Gastrocnemius medialis (tissue), 4 donors: ENCODE measurements at regions of chr2 and their contacts with region 1.

Region 1: DNA sequence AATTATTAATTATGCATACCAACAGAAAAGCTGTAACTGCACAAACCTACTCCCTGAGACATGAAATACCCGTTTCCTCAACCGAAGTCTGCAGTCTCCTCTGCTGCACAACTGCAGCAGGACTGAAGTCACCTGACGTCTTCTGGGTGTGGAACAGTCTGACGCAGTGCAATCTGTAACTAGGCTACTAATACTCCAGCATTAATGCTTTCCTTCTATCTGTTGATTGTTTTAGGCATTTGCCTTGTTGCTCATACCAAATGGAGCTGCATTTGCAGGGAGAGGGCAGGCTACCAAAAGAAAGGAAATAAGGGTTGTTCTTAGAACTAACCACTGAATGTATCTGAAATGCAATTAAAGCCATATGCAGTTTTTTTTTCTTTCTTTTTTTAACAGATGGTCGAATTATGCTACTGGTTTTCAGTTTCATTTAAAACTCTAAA is 40.1 kb downstream of the RTN4 start:
- DNase-seq: peak; percentile 76 to 82
- ATAC-seq: peak; percentile 85 to 88
- H3K4me3 ChIP-seq: peak overlapping the region; percentile 50 to 63 (median 54)
- H3K27ac ChIP-seq: peak overlapping the region; percentile 89 to 94 (median 91)
- H3K4me1 ChIP-seq: peaks cover 61 to 62% of the 10 kb centered on the region in 2 donors
- H3K27me3 ChIP-seq: no peaks in the 10 kb centered on the region
- CTCF ChIP-seq: no peak
- POLR2A ChIP-seq: peak; percentile 63 to 80

Region 2: DNA sequence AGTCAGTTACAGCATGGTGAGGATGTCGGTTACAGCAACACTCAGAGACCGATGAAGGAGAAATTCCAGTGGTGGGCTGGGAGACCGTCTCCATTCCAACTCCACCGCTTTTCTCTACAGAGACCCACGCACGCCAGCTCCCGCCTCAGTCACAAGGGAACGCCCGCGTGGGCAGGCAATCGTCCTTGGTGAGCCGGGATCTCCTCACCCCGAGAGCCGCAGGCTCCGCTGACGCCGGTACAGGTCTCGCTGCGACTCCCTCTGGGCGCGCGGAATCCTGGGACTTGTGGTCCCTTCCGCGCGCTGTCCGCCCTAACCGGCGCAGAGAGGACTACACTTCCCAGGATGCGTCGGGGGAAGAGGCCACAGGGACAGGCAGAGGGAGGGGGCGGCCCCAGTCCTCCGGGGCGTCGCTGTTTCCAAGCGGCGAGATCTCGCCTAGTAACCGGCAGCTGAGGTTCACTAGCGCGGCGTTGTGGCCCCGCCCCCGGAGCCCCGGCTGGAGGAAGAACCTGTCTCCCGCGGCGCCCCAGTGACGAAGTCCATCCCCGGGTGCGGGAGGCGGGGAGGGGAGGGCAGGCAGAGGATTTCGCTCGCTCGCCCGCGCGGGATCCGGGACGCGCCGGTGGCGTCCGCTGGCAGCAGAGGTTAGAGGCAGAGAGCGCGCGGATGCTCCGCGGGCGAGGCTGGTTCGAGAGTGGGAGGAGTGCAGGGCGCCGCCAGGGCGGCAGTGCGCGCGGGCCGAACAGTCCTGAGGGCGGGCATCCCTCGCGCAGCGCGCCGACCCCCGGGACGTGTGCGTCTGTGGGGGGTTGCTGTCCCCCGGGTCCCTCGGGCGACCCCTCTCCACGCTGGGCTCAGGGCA is 286.8 kb before region 1 on chr2 and contains the start of gene EML6:
- in situ Hi-C with region 1: loop called in 1 of 4 experiments (anchors 25 kb)
- intact Hi-C with region 1: loop called (anchors 5 kb)
- DNase-seq: peak; percentile 97 to 98
- ATAC-seq: peak; percentile 96 to 98
- H3K4me3 ChIP-seq: peak within 1 kb of the TSS; percentile 60 to 88 (median 76)
- H3K27ac ChIP-seq: peak within 1 kb of the TSS; percentile 79 to 86 (median 82)
- H3K4me1 ChIP-seq: peaks cover 7 to 11% of the 10 kb centered on the region in 2 donors
- H3K27me3 ChIP-seq: no peaks in the 10 kb centered on the region
- CTCF ChIP-seq: peak in 3 of 5 experiments; percentile 6 to 35 (median 28)
- POLR2A ChIP-seq: peak; percentile 53 to 78
- total RNA-seq, gene EML6: 2.7 to 42.5 (median 11.9) TPM

Region 3: GRCh38 chr2:54927085-54927750 is 83.0 kb before region 1 on chr2:
- in situ Hi-C with region 1: no loop called
- intact Hi-C with region 1: loop called (anchors 5 kb)
- DNase-seq: peak in 1 of 2 donors; percentile 61
- ATAC-seq: peak; percentile 83
- H3K4me3 ChIP-seq: peak overlapping the region in 2 of 4 donors; percentile 31 to 35
- H3K27ac ChIP-seq: peak overlapping the region; percentile 77 to 88 (median 80)
- H3K4me1 ChIP-seq: peaks cover 9 to 15% of the 10 kb centered on the region in 2 donors
- H3K27me3 ChIP-seq: no peaks in the 10 kb centered on the region
- CTCF ChIP-seq: no peak
- POLR2A ChIP-seq: no peak

Region 4: GRCh38 chr2:54968561-54969218 is 41.5 kb before region 1 on chr2:
- in situ Hi-C with region 1: no loop called
- intact Hi-C with region 1: no loop called
- DNase-seq: peak; percentile 84 to 93
- ATAC-seq: peak; percentile 85 to 86
- H3K4me3 ChIP-seq: no peak overlapping the region
- H3K27ac ChIP-seq: peak overlapping the region; percentile 89 to 93 (median 91)
- H3K4me1 ChIP-seq: peaks cover 82 to 99% of the 10 kb centered on the region in 2 donors
- H3K27me3 ChIP-seq: no peaks in the 10 kb centered on the region
- CTCF ChIP-seq: no peak
- POLR2A ChIP-seq: no peak

Region 5: GRCh38 chr2:55232084-55232862 is 222.1 kb after region 1 on chr2 and contains the starts of genes CLHC1 and RPS27A:
- in situ Hi-C with region 1: no loop called
- intact Hi-C with region 1: loop called (anchors 5 kb)
- DNase-seq: peak; percentile 86 to 87
- ATAC-seq: peak; percentile 98
- H3K4me3 ChIP-seq: peak within 1 kb of the TSS; percentile 72 to 96 (median 87)
- H3K27ac ChIP-seq: peak within 1 kb of the TSS; percentile 89 to 96 (median 92)
- H3K4me1 ChIP-seq: peaks cover 23 to 24% of the 10 kb centered on the region in 2 donors
- H3K27me3 ChIP-seq: no peaks in the 10 kb centered on the region
- CTCF ChIP-seq: peak in 2 of 5 experiments; percentile 9 to 16
- POLR2A ChIP-seq: peak; percentile 85 to 87
- total RNA-seq, gene CLHC1: 0.46 to 4.9 (median 0.85) TPM in 3 of 4 donors, not detected in the other
- total RNA-seq, gene RPS27A: 884 to 1,266 (median 965) TPM

Region 6: DNA sequence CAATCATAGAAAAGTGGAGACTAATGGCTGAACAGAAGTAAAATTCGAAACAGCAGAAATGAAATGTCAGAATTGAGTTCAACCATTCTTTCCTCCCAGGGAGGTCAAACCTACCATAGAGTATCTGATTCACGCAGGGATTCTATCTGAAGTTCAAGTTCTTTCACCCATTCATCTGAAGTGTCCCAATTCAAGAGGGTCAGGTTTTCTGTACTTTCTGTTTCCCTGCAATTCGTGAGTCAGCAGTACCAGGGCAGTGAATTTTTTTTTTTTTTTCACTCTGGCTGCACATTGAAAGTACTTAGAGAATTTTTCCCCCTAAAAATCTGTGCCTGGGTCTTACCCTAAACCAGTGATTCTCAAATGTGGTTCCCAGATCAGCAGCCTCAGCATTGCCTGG is 450.4 kb after region 1 on chr2:
- in situ Hi-C with region 1: no loop called
- intact Hi-C with region 1: no loop called
- DNase-seq: no peak
- ATAC-seq: no peak
- H3K4me3 ChIP-seq: no peak overlapping the region
- H3K27ac ChIP-seq: no peak overlapping the region
- H3K4me1 ChIP-seq: no peaks in the 10 kb centered on the region
- H3K27me3 ChIP-seq: no peaks in the 10 kb centered on the region
- CTCF ChIP-seq: no peak
- POLR2A ChIP-seq: no peak